Tibial artery (tissue), 4 donors: ENCODE measurements at regions of chr13 and their contacts with region 1.

Region 1: GRCh38 chr13:26054896-26055295 is 3.1 kb upstream of the SHISA2 start:
- DNase-seq: no peak
- H3K4me3 ChIP-seq: no peak overlapping the region
- H3K27ac ChIP-seq: no peak overlapping the region
- H3K4me1 ChIP-seq: peaks cover 0 to 24% (median 16%) of the 10 kb centered on the region in 4 donors
- H3K27me3 ChIP-seq: peaks cover 0 to 39% of the 10 kb centered on the region in 2 donors
- CTCF ChIP-seq: no peak

Region 2: GRCh38 chr13:25574437-25575411 is 480.2 kb before region 1 on chr13:
- intact Hi-C with region 1: loop called (anchors 5 kb)
- DNase-seq: peak; percentile 62 to 73
- H3K4me3 ChIP-seq: no peak overlapping the region
- H3K27ac ChIP-seq: no peak overlapping the region
- H3K4me1 ChIP-seq: no peaks in the 10 kb centered on the region
- H3K27me3 ChIP-seq: peaks cover 0 to 12% of the 10 kb centered on the region in 2 donors
- CTCF ChIP-seq: peak; percentile 64 to 73